Natural killer cell (primary cell): ENCODE measurements at regions of chr7 and their contacts with region 1.

Region 1: DNA sequence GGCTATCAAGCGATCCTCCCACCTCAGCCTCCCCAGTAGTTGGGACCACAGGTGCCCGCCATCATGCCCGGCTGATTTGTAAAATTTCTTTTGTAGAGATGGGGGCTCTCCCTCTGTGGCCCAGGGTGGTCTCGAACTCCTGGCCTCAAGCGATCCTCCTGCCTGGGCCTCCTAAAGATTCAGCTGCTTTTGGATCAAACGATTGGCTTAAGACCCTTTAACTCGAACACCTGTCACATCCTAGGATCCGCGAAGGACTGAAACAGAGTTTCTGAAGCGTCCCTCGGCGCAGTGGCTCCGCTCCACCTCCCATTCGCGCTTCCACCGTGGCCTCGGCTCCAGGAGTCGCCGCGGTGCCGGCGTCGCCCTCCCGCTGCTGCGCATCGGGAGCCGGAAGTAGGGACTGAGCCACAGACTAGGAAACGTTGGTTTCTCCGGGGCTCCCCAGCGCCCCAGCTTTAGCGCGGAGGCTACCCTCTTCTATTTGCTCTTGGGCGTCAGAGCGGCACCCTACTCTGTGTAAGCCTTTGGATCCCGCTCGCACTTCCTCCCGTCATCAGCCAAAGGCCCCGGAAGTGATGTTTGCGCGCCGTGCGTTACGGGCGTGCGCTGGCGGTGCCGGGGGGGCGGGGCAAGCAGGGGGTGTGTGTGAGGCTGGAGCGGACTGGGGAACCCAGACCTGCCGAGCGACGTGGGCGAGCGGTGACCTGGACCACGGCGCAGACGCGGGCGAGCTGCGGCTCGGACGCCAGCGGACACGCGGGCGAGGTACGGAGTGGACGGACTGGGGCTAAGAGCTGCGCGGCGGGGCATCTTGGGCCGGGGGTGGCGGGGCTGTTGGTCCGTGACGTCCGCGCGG is 53.0 kb downstream of the KCTD7 start:
- DNase-seq: peak; percentile 94 to 98
- ATAC-seq: peak; percentile 98 to 100 (median 98)
- H3K4me3 ChIP-seq: peak overlapping the region; percentile 100
- H3K4me3 Mint-ChIP-seq: peak overlapping the region; percentile 92
- H3K27ac ChIP-seq: peak overlapping the region; percentile 100
- H3K27ac Mint-ChIP-seq: peak overlapping the region; percentile 95 to 97
- H3K4me1 ChIP-seq: peaks cover 21% of the 10 kb centered on the region
- H3K4me1 Mint-ChIP-seq: peaks cover 21 to 33% of the 10 kb centered on the region in 2 donors
- H3K27me3 ChIP-seq: no peaks in the 10 kb centered on the region
- H3K27me3 Mint-ChIP-seq: no peaks in the 10 kb centered on the region
- CTCF ChIP-seq: no peak

Region 2: DNA sequence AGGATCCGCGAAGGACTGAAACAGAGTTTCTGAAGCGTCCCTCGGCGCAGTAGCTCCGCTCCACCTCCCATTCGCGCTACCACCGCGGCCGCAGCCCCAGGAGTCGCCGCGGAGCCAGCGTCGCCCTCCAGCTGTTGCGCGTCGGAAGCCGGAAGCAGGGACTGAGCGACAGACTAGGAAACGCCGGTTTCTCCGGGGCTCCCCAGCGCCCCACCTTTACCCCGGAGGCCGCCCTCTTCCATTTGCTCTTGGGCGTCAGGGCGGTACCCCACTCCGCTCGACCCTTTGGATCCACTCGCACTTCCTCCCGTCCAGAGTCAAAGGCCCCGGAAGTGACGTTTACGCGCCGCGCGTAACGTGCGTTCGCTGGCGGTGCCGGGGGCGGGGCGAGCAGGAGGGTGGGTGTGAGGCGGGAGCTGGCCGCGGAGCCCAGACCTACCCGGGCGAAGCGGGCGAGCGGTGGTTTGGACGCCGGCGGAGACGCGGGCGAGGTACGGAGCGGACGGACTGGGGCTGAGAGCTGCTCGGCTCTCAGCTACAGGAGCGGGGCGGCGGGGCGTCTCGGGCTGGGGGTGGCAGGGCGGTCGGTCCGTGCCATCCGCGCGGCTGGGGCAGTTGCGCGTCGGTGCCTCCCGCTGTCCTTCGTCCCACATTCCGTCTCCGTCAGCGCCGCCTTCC is 58.7 kb after region 1 on chr7 and contains the start of gene RABGEF1:
- intact Hi-C with region 1: loop called (anchors 2 kb)
- DNase-seq: peak; percentile 96 to 99
- ATAC-seq: peak; percentile 86 to 97 (median 88)
- H3K4me3 ChIP-seq: peak within 1 kb of the TSS; percentile 97
- H3K4me3 Mint-ChIP-seq: peak within 1 kb of the TSS; percentile 95
- H3K27ac ChIP-seq: peak within 1 kb of the TSS; percentile 98
- H3K27ac Mint-ChIP-seq: peak within 1 kb of the TSS; percentile 98
- H3K4me1 ChIP-seq: peaks cover 31% of the 10 kb centered on the region
- H3K4me1 Mint-ChIP-seq: peaks cover 38 to 41% of the 10 kb centered on the region in 2 donors
- H3K27me3 ChIP-seq: no peaks in the 10 kb centered on the region
- H3K27me3 Mint-ChIP-seq: no peaks in the 10 kb centered on the region
- CTCF ChIP-seq: no peak
- total RNA-seq, gene RABGEF1: 26.1 to 38.1 (median 31.7) TPM